Sigmoid colon (tissue), 7 donors: ENCODE measurements at regions of chr14 and their contacts with region 1.

Region 1: GRCh38 chr14:91060351-91061055 is at the start of gene RPS6KA5:
- DNase-seq: peak; percentile 100
- H3K4me3 ChIP-seq: peak within 1 kb of the TSS; percentile 75 to 96 (median 94)
- H3K27ac ChIP-seq: peak within 1 kb of the TSS; percentile 98 to 99 (median 98)
- H3K4me1 ChIP-seq: peaks cover 0 to 67% (median 41%) of the 10 kb centered on the region in 4 donors
- H3K27me3 ChIP-seq: no peaks in the 10 kb centered on the region
- CTCF ChIP-seq: peak in 2 of 4 experiments; percentile 27 to 30
- EP300 ChIP-seq: peak in 1 of 4 donors; percentile 29
- POLR2A ChIP-seq: peak; percentile 87 to 91
- total RNA-seq, gene RPS6KA5: 18.2 to 36.4 (median 25.9) TPM

Region 2: GRCh38 chr14:90624223-90624622 is 436.3 kb before region 1 on chr14:
- intact Hi-C with region 1: no loop called
- DNase-seq: peak; percentile 74
- H3K4me3 ChIP-seq: no peak overlapping the region
- H3K27ac ChIP-seq: peak overlapping the region; percentile 71 to 84 (median 76)
- H3K4me1 ChIP-seq: peaks cover 0 to 52% (median 45%) of the 10 kb centered on the region in 4 donors
- H3K27me3 ChIP-seq: no peaks in the 10 kb centered on the region
- CTCF ChIP-seq: no peak
- EP300 ChIP-seq: no peak
- POLR2A ChIP-seq: no peak

Region 3: DNA sequence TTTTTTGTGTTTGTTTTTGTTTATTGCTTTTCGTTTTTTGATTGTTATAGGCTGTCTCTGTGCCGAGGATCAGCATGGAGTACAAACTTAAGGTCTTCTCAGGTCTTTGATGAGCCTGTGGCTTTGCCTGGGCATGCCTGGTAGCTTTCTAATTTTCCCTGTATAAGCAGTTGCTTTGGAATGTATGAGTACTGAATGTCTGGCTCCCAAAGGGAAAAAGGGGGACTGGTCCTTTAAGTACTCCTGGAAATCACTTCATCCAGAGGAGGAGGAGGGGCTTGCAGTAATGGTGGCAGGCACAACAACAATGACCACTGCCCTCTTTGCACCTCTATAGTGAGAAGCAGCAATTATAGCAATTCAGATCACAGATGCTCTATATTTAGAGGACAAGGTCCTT is 176.7 kb before region 1 on chr14:
- intact Hi-C with region 1: no loop called
- DNase-seq: no peak
- H3K4me3 ChIP-seq: no peak overlapping the region
- H3K27ac ChIP-seq: no peak overlapping the region
- H3K4me1 ChIP-seq: no peaks in the 10 kb centered on the region
- H3K27me3 ChIP-seq: no peaks in the 10 kb centered on the region
- CTCF ChIP-seq: no peak
- EP300 ChIP-seq: no peak
- POLR2A ChIP-seq: no peak

Region 4: DNA sequence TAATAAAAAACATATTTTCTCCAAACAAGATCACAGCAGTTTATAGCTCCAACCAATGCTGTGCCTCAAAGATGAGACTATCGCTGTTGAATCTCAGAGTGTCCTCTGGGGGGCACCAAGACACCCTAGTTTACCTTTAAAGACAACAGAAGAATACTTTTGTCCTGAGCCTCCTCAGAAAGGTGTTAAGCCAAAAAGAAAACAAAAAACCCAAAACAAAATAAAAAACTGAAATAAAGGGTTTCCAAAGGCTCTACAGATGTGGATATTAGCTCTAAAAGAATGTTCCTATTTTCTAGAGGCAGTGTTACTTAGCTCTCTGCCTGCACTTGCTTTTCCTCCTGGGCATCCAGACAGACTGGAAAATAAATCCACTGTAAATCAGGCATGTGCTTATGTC is 157.4 kb before region 1 on chr14:
- intact Hi-C with region 1: loop called (anchors 5 kb)
- DNase-seq: peak; percentile 74
- H3K4me3 ChIP-seq: no peak overlapping the region
- H3K27ac ChIP-seq: no peak overlapping the region
- H3K4me1 ChIP-seq: peaks cover 0 to 7% (median 4%) of the 10 kb centered on the region in 4 donors
- H3K27me3 ChIP-seq: no peaks in the 10 kb centered on the region
- CTCF ChIP-seq: peak; percentile 66 to 84 (median 72)
- EP300 ChIP-seq: no peak
- POLR2A ChIP-seq: no peak

Region 5: GRCh38 chr14:91021991-91022621 is 38.4 kb before region 1 on chr14:
- intact Hi-C with region 1: loop called (anchors 5 kb)
- DNase-seq: no peak
- H3K4me3 ChIP-seq: peak overlapping the region; percentile 18 to 45 (median 37)
- H3K27ac ChIP-seq: peak overlapping the region; percentile 63 to 79 (median 73)
- H3K4me1 ChIP-seq: peaks cover 0 to 53% (median 18%) of the 10 kb centered on the region in 4 donors
- H3K27me3 ChIP-seq: no peaks in the 10 kb centered on the region
- CTCF ChIP-seq: no peak
- EP300 ChIP-seq: no peak
- POLR2A ChIP-seq: no peak

Region 6: DNA sequence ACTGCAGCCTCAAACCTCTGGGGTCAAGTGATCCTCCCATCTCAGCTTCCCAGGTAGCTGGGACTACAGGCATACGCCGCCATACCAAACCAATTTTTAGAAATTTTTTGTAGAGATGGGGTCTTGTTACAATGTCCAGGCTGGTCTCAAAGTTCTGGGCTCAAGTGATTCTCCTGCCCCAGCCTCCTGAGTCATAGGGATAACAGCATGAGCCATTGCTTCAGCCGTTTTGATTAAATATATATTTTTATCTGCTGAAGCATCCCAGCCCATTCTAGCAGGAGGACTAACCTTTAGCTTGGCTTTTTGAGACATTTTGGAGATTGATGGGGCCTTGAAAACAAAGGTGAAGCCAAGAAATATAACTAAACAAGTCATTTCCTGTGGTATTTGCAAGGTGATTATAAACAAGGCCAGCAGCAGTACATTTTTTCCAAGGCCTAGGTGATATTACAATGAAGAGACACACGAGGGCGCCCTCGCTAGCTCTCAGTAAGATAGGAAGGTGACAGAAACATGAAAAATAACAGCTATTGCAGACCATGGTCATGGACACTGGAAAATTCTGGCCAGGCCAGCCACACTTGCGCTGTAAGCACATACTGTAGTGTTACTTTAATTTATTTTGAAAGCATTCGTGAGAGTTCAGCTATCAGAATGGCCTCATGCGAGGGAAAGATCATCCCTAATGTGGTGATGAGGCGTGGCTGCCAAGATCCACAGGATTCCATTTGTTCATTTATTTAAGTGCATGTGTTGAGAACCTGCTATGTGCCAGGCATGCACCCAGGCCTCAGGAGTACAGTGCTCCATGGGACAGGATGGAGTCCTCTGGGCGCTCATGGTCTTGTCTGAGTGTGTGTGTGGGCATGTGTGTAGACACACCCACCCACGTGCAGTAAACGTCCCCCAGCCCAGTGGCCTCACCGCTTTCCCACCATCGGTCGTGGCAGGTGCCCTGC is 116.9 kb after region 1 on chr14:
- intact Hi-C with region 1: loop called (anchors 1 kb)
- DNase-seq: no peak
- H3K4me3 ChIP-seq: no peak overlapping the region
- H3K27ac ChIP-seq: no peak overlapping the region
- H3K4me1 ChIP-seq: peaks cover 0 to 17% (median 3%) of the 10 kb centered on the region in 4 donors
- H3K27me3 ChIP-seq: no peaks in the 10 kb centered on the region
- CTCF ChIP-seq: peak; percentile 41 to 74 (median 65)
- EP300 ChIP-seq: no peak
- POLR2A ChIP-seq: no peak

Region 7: DNA sequence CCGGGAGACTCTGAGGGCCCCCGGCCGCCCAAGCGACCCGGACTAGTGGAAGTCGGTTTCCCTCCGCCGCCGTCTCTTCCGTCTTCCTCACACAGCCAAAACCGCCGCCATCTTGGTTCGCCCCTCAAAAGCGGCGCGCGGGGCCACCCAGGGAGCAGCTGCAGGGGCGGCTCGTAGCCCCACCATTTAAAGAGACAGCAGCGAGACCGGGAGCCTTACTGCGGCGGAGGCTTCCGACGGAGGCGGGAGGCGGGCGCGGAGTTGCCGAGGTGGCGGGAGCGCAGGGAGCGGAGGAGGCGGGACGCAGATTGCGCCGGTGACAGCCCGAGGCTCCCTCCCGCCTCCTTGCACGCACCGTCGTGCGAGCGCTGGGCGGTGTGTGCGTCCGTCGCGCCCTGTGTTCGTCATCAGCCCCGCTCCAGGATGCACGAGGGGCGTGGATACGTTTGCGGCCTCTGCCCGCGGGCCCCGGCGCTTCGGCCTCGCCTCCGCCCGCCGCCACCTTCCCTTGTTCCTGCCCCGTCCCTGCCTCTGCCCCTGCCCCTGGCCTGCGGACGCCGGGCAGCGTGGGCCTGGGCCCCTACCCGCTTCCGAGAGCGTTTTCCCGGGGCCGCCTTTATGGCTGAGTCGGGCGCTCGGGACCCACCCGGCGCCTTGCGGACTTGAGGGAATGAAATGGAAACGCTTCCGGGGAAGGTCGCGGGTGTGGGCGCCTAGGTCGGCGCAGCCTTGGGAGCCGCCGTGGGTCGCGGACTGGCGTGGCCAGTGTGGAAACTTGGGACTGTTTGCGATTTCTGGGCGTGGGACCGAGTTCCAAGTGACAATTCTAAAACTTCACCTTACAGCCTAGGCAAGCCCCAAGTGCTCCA is 449.9 kb after region 1 on chr14 and contains the start of gene PPP4R3A:
- intact Hi-C with region 1: loop called (anchors 5 kb)
- DNase-seq: peak; percentile 97
- H3K4me3 ChIP-seq: peak within 1 kb of the TSS; percentile 86 to 100 (median 96)
- H3K27ac ChIP-seq: peak within 1 kb of the TSS; percentile 99 to 100 (median 100)
- H3K4me1 ChIP-seq: peaks cover 0 to 36% (median 30%) of the 10 kb centered on the region in 4 donors
- H3K27me3 ChIP-seq: no peaks in the 10 kb centered on the region
- CTCF ChIP-seq: no peak
- EP300 ChIP-seq: peak in 3 of 4 donors; percentile 22 to 59 (median 46)
- POLR2A ChIP-seq: peak; percentile 68 to 82
- total RNA-seq, gene PPP4R3A: 69.6 to 78.9 (median 75.1) TPM